Calu3 (cell line): ENCODE measurements at regions of chr11 and their contacts with region 1.

Region 1: GRCh38 chr11:118928108-118928870 is 2.6 kb upstream of the BCL9L start:
- DNase-seq: peak; percentile 87
- H3K4me3 Mint-ChIP-seq: peak overlapping the region; percentile 83
- H3K27ac Mint-ChIP-seq: peak overlapping the region; percentile 90
- H3K4me1 Mint-ChIP-seq: peaks cover 46% of the 10 kb centered on the region
- H3K27me3 Mint-ChIP-seq: no peaks in the 10 kb centered on the region
- CTCF ChIP-seq: peak; percentile 73

Region 2: DNA sequence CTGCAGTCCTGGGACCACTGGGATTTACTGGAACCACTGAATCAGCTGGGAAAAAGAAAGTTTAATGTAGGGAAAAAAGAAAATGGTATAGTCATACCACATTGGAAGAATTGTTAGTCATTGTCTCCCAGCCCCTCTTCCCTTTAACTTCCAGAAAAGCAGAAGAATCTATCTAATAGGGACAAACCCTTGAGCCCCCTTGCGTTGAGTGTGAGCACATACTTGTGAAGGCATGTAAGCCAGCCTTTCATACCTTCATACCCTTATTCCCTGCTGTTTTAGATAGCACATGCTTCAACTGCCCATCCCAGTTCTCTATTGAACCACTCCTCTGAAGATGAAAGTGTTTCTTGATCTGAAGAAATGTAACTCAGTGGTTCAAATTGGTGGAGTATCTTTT is 255.4 kb before region 1 on chr11:
- CTCF ChIA-PET with region 1: no interaction called
- intact Hi-C with region 1: no loop called
- DNase-seq: no peak
- H3K4me3 Mint-ChIP-seq: no peak overlapping the region
- H3K27ac Mint-ChIP-seq: no peak overlapping the region
- H3K4me1 Mint-ChIP-seq: no peaks in the 10 kb centered on the region
- H3K27me3 Mint-ChIP-seq: no peaks in the 10 kb centered on the region
- CTCF ChIP-seq: no peak

Region 3: DNA sequence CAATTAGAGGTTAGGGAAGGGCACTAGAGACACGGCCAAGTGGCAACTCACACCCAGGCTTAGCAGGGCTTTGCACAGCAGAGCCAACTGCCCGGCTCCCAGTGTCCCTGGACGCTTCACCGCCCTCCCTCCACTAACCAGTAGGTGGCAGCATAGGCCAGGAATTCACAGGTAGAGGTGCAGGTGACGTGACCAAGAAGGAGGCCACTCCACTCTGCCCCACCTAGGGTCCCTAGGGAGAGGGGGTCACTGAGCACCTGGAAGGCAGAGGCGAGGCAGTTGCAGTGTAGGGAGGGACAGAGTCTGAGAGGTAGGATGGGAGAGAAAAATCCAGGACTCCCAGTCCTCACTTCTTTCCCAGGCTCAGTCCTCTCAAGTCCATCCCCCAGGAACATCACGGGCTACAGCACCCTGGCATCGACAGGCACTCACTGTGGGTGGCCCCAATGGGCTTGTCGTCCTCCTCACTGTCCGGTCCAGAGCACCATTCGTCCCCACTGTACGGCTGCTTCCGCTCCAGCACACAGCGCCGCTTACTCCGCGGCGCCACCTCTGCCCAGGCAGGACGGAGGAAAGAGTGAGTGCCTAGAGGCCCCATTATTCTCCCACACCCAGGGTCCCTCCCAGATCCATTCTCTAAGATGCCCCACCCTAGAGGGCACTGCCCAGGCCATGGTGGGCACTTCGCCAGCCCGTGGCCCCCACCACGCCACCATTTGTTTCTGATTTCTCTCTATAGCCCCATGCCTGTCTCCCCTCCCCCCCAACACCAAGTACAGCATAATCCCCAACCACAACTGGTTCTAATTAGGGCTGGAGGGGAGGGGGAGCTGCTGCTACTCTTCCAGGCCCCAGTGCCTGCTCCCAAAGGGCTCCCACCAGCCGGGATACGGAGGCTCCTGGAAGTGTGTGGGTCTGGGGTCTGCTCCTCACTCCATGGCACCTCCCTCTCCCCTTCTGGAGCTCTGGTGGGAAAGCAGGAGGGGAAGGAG is 20.9 kb before region 1 on chr11:
- CTCF ChIA-PET with region 1: interaction called, 10 read pairs
- intact Hi-C with region 1: loop called (anchors 1 kb)
- DNase-seq: peak; percentile 88
- H3K4me3 Mint-ChIP-seq: peak overlapping the region; percentile 50
- H3K27ac Mint-ChIP-seq: peak overlapping the region; percentile 74
- H3K4me1 Mint-ChIP-seq: peaks cover 29% of the 10 kb centered on the region
- H3K27me3 Mint-ChIP-seq: no peaks in the 10 kb centered on the region
- CTCF ChIP-seq: peak; percentile 81